Endothelial cell of umbilical vein (primary cell): ENCODE measurements at regions of chr6 and their contacts with region 1.

Region 1: GRCh38 chr6:4775584-4776494 is at the start of gene CDYL:
- DNase-seq: peak; percentile 82
- H3K4me3 ChIP-seq: peak within 1 kb of the TSS; percentile 51 to 90 (median 64)
- H3K27ac ChIP-seq: no peak within 1 kb of the TSS
- H3K4me1 ChIP-seq: peaks cover 12% of the 10 kb centered on the region
- H3K27me3 ChIP-seq: peaks cover 30 to 33% of the 10 kb centered on the region in 2 experiments
- CTCF ChIP-seq: peak in 1 of 2 donors; percentile 23
- POLR2A ChIP-seq: no peak
- total RNA-seq, gene CDYL: 34.1 and 35.6 TPM in 2 replicates

Region 2: DNA sequence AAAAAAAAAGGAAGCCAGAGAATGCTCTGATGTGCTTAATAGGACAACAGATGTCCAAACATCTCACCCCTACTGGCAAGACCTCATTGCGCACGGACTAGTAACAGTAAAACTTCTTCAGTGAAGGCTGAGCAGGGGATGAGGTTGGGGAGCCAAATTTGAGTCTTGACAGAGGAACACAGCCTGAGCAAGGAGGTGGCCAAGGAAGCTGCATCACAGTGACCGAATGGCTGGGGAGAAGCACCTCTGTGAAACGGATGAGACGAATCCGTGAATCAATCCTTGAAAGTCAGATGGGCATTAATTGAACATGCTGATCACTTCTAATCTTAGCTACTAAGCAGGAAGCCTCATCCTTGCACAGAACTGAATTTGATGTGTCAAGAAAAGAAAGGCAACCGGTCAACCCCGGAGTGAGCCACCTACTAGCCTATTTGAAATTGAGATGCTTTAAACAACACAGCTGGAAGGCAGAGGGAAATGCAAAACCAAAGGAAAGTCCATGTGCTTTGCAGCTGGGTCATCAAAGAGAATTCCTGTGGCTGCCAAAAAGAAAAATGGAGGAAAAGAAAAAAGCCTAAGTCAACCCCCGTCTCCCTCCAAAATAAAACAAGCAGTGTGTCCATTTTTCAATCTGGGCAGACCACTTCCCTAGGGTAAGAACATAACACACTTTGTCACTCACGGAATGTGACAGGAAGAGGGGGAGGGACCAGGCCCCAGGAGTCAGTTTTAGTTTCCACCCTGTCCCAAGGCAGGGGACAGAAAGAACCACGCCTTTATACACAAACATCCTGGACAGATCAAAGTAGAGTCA is 1053.8 kb before region 1 on chr6:
- CTCF ChIA-PET with region 1: no interaction called
- POLR2A ChIA-PET with region 1: no interaction called
- dilution Hi-C with region 1: no loop called
- intact Hi-C with region 1: no loop called
- DNase-seq: no peak
- H3K4me3 ChIP-seq: no peak overlapping the region
- H3K27ac ChIP-seq: no peak overlapping the region
- H3K4me1 ChIP-seq: no peaks in the 10 kb centered on the region
- H3K27me3 ChIP-seq: no peaks in the 10 kb centered on the region
- CTCF ChIP-seq: no peak
- POLR2A ChIP-seq: no peak

Region 3: DNA sequence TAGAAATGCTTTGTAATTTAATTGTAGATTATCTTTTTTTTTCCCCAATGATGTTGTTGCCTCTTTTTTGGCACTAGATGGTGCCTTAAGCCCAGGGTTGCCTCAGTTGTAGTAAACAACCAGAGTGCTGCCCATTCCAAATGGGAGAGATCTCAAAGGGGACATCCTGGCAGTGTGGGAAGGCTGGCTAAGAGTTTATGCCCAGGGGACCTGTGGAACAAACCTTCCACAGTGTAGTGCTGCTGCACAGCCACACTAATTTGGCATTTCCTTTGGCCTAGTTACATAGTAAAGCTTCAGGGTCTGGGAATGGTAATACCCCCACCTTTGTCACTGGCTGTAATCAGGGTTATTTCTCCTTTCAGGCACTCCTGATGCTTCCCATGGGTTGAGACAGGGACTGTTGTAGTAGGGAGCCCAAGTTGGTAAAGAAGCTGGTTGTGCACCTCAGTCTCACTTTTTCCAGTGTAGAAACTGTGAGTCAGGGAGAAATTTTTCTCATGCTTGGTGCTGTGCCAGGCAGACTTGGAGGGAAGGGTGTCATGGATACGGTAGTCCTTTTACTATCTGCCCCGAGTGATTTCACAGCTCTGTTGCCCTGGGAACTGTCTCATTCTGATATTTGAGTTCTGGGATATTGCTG is 462.7 kb before region 1 on chr6:
- CTCF ChIA-PET with region 1: interaction called, 26 read pairs
- POLR2A ChIA-PET with region 1: interaction called, 3 read pairs
- dilution Hi-C with region 1: no loop called
- intact Hi-C with region 1: loop called (anchors 1 kb)
- DNase-seq: peak; percentile 95
- H3K4me3 ChIP-seq: no peak overlapping the region
- H3K27ac ChIP-seq: peak overlapping the region; percentile 56
- H3K4me1 ChIP-seq: peaks cover 23% of the 10 kb centered on the region
- H3K27me3 ChIP-seq: no peaks in the 10 kb centered on the region
- CTCF ChIP-seq: peak; percentile 28 to 45
- POLR2A ChIP-seq: no peak

Region 4: DNA sequence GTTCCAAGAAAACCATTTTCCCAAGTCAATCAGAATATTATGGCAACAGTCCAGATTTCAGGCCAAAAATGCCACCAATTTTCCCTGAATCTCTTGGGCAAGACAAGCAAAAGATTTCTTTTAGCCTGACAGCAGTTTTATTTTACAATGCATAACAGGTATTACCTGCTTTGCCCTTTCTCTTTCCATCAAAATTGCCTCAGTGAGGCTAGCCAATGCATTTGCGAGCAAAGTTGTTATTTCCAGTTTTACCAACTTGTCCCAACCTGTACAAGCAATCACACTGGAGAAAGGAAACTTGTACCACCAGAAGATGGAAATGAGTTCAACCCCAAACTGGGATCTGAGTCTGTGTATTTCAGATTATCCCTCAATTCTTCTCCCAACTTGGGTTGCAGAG is 279.6 kb before region 1 on chr6:
- CTCF ChIA-PET with region 1: no interaction called
- POLR2A ChIA-PET with region 1: no interaction called
- dilution Hi-C with region 1: no loop called
- intact Hi-C with region 1: no loop called
- DNase-seq: no peak
- H3K4me3 ChIP-seq: no peak overlapping the region
- H3K27ac ChIP-seq: no peak overlapping the region
- H3K4me1 ChIP-seq: no peaks in the 10 kb centered on the region
- H3K27me3 ChIP-seq: peaks cover 0 to 2% of the 10 kb centered on the region in 2 experiments
- CTCF ChIP-seq: no peak
- POLR2A ChIP-seq: no peak

Region 5: GRCh38 chr6:4647414-4648365 is 128.1 kb before region 1 on chr6:
- CTCF ChIA-PET with region 1: interaction called, 7 read pairs
- POLR2A ChIA-PET with region 1: no interaction called
- dilution Hi-C with region 1: no loop called
- intact Hi-C with region 1: loop called (anchors 1 kb)
- DNase-seq: peak; percentile 77
- H3K4me3 ChIP-seq: peak overlapping the region in 1 of 3 experiments; percentile 25
- H3K27ac ChIP-seq: no peak overlapping the region
- H3K4me1 ChIP-seq: peaks cover 14% of the 10 kb centered on the region
- H3K27me3 ChIP-seq: no peaks in the 10 kb centered on the region
- CTCF ChIP-seq: no peak
- POLR2A ChIP-seq: no peak

Region 6: GRCh38 chr6:4726645-4727044 is 49.2 kb before region 1 on chr6:
- CTCF ChIA-PET with region 1: no interaction called
- POLR2A ChIA-PET with region 1: no interaction called
- dilution Hi-C with region 1: no loop called
- intact Hi-C with region 1: no loop called
- DNase-seq: no peak
- H3K4me3 ChIP-seq: no peak overlapping the region
- H3K27ac ChIP-seq: no peak overlapping the region
- H3K4me1 ChIP-seq: no peaks in the 10 kb centered on the region
- H3K27me3 ChIP-seq: peaks cover 11 to 12% of the 10 kb centered on the region in 2 experiments
- CTCF ChIP-seq: no peak
- POLR2A ChIP-seq: no peak

Region 7: GRCh38 chr6:4788953-4789584 is 13.2 kb after region 1 on chr6:
- CTCF ChIA-PET with region 1: interaction called, 8 read pairs
- POLR2A ChIA-PET with region 1: no interaction called
- dilution Hi-C with region 1: no loop called
- intact Hi-C with region 1: loop called (anchors 2 kb)
- DNase-seq: no peak
- H3K4me3 ChIP-seq: no peak overlapping the region
- H3K27ac ChIP-seq: no peak overlapping the region
- H3K4me1 ChIP-seq: no peaks in the 10 kb centered on the region
- H3K27me3 ChIP-seq: no peaks in the 10 kb centered on the region
- CTCF ChIP-seq: no peak
- POLR2A ChIP-seq: no peak

Region 8: DNA sequence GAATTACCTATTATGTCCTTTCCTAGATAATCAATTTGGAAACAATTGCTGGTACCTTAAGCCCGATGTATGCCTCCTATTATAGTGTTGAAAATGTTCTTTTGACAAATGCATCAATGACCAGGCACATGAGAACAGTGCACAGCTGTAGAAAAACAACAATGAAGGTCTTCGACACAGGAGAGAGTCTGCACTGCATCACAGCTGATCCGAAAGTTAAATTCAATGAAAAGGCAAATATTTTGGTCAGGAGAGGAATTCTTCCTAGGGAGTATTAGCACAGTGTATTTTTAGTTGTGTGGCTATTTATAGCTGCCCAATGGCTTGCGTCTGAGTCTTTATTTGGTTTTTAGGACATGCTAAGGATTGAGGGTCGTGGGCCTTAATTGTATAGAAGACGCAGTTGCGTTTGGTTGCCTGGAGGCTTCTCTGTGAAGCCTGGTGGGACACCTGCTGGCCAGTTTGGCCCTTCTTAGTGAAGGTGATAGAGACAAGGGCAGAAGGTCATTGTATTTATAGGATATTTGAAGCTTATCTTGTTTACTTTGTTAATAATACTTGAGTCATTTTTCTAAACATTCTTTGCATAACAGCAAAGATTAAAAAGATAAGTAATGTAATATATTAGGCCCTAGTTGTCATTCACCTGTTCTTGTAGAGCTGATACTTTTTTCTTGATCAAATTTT is 72.7 kb after region 1 on chr6:
- CTCF ChIA-PET with region 1: interaction called, 11 read pairs
- POLR2A ChIA-PET with region 1: no interaction called
- dilution Hi-C with region 1: no loop called
- intact Hi-C with region 1: loop called (anchors 1 kb)
- DNase-seq: peak; percentile 56
- H3K4me3 ChIP-seq: no peak overlapping the region
- H3K27ac ChIP-seq: no peak overlapping the region
- H3K4me1 ChIP-seq: peaks cover 12% of the 10 kb centered on the region
- H3K27me3 ChIP-seq: no peaks in the 10 kb centered on the region
- CTCF ChIP-seq: peak; percentile 23 to 34
- POLR2A ChIP-seq: no peak

Region 9: GRCh38 chr6:5030596-5031136 is 254.8 kb after region 1 on chr6:
- CTCF ChIA-PET with region 1: no interaction called
- POLR2A ChIA-PET with region 1: no interaction called
- dilution Hi-C with region 1: no loop called
- intact Hi-C with region 1: loop called (anchors 1 kb)
- DNase-seq: peak; percentile 83
- H3K4me3 ChIP-seq: no peak overlapping the region
- H3K27ac ChIP-seq: no peak overlapping the region
- H3K4me1 ChIP-seq: peaks cover 7% of the 10 kb centered on the region
- H3K27me3 ChIP-seq: no peaks in the 10 kb centered on the region
- CTCF ChIP-seq: peak; percentile 71 to 74
- POLR2A ChIP-seq: no peak

Region 10: GRCh38 chr6:5566718-5567117 is 790.9 kb after region 1 on chr6:
- CTCF ChIA-PET with region 1: no interaction called
- POLR2A ChIA-PET with region 1: no interaction called
- dilution Hi-C with region 1: no loop called
- intact Hi-C with region 1: no loop called
- DNase-seq: no peak
- H3K4me3 ChIP-seq: no peak overlapping the region
- H3K27ac ChIP-seq: no peak overlapping the region
- H3K4me1 ChIP-seq: no peaks in the 10 kb centered on the region
- H3K27me3 ChIP-seq: no peaks in the 10 kb centered on the region
- CTCF ChIP-seq: no peak
- POLR2A ChIP-seq: no peak